RWPE1 (cell line): ENCODE measurements at regions of chr10 and their contacts with region 1.

Region 1: GRCh38 chr10:121594623-121595350 is 3.5 kb downstream of the FGFR2 start:
- DNase-seq: no peak
- H3K27ac ChIP-seq: no peak overlapping the region
- CTCF ChIP-seq: no peak

Region 2: GRCh38 chr10:121368347-121369025 is 226.3 kb before region 1 on chr10:
- CTCF ChIA-PET with region 1: no interaction called
- POLR2A ChIA-PET with region 1: interaction called, 12 read pairs
- DNase-seq: no peak
- H3K27ac ChIP-seq: no peak overlapping the region
- CTCF ChIP-seq: no peak